A549 (cell line): ENCODE measurements at regions of chr1 and their contacts with region 1.

Region 1: DNA sequence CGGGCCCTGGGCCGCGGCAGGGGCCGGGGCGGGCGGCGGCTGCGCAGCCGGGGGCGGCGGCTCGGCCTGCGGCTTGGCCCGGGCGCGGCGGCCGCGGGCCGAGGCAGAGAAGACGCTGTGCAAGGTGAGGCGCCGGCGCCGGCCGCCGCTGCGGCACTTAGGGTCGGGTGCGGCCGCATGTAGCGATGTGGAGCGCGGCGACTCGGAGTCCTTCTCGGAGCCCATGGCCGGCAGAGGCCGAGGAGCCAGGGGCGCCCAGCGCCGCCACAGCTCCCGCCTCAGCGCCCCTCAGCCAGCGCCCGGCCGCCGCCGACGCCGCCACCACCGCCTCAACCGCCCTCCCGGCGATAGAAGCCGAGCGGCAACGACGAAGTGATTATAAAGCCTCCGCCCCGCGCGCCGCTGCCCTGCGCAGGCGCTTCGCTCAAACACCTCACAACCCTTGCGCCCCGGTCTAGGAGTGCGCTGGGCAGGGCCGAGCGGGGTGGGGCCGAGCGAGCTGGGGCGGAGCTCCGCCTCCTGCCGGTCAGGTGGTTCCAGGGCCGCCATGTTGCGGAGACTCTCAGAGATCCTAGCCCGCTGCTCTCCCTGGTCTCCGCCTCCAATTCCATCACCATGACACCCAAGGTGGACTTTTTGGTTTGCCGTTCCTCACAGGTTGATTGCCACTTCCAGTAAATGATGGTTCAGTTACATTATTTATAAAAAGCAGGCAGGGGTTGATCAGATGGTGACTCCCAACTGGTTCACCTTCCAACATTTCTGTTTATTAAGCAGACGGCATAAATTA is at the start of gene RNF19B:
- DNase-seq: peak; percentile 90 to 94
- ATAC-seq: peak; percentile 90 to 98
- H3K4me3 ChIP-seq: peak within 1 kb of the TSS; percentile 91
- H3K27ac ChIP-seq: peak within 1 kb of the TSS; percentile 81 to 98
- H3K4me1 ChIP-seq: peaks cover 16% of the 10 kb centered on the region; the same call in 2 of the 3 replicates
- CTCF ChIP-seq: no peak
- EP300 ChIP-seq: no peak
- POLR2A ChIP-seq: peak; percentile 98
- RAD21 ChIP-seq: peak; percentile 2 to 27; a peak in 1 of 5 replicates
- polyA plus RNA-seq, gene RNF19B: 21.7 and 22.6 TPM in 2 replicates

Region 2: DNA sequence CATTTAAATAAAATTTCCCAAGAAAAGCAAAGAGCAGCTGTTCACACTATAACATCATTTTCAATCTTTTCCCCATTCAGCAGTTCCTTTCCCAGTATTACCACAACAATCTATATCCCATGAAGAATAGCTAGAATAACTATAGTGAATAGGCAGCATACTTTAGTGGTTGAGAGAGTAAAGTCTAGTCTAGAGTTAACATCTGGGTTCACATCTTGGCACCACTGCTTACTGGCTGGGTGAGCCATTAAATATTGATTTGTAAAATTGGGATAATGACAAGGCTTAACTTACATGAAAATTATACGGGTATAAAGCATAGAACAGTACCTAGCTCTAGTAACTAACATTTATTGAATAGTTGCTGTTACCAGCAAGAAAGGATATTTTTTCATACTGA is 132.8 kb before region 1 on chr1:
- CTCF ChIA-PET with region 1: no interaction called
- POLR2A ChIA-PET with region 1: no interaction called
- DNase-seq: no peak
- ATAC-seq: no peak
- H3K4me3 ChIP-seq: no peak overlapping the region
- H3K27ac ChIP-seq: no peak overlapping the region
- H3K4me1 ChIP-seq: no peaks in the 10 kb centered on the region
- CTCF ChIP-seq: no peak
- EP300 ChIP-seq: no peak
- POLR2A ChIP-seq: no peak
- RAD21 ChIP-seq: no peak

Region 3: DNA sequence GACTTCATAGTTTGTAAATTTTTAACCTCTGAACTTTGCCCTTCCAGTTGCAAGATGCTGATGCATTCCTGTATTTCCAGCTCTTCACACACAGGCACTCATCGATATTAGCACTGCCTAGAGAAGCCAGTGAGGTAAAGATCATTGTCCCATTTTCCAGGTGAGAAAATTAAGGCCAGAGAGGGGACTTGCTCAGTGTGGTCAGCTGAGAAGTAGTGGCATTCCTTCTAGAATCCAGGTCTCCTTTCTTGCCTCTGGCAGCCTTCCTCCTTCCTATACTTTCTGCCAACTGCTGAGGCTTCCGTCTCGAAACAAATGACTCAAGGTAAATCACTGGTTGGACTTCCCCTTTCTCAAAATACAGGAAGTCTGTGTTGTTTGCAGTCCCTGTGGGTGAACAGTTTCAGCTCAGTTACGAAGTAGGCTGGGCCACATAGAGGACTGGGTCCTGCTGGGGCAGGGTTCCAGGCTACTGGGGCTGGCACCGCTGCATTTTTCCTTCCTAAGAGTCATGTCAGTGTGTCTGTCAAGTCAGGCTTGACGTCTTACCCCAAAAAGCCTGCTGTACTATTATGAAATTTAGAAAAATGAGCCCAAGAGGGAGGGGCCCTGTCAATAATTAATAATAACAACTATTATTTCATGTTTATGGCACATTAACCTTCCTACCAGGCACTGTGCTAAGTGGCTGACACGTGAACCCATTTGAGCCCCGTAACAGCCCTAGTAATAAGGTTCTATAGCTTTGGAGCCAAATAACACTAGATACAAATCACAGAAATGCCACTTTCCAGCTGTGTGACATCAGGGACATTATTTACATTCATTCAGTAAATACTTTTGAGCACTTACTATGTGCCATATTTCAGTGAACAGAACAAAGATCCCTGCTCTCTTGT is 16.6 kb after region 1 on chr1:
- CTCF ChIA-PET with region 1: interaction called, 4 read pairs
- POLR2A ChIA-PET with region 1: interaction called, 28 read pairs
- DNase-seq: peak; percentile 72 to 91
- ATAC-seq: peak; percentile 97 to 98
- H3K4me3 ChIP-seq: no peak overlapping the region
- H3K27ac ChIP-seq: peak overlapping the region; percentile 84 to 87
- H3K4me1 ChIP-seq: peaks cover 24% of the 10 kb centered on the region
- CTCF ChIP-seq: no peak
- EP300 ChIP-seq: no peak; a peak in 1 of 5 replicates
- POLR2A ChIP-seq: peak; percentile 19; the same call in 1 of the 2 replicates
- RAD21 ChIP-seq: no peak

Region 4: DNA sequence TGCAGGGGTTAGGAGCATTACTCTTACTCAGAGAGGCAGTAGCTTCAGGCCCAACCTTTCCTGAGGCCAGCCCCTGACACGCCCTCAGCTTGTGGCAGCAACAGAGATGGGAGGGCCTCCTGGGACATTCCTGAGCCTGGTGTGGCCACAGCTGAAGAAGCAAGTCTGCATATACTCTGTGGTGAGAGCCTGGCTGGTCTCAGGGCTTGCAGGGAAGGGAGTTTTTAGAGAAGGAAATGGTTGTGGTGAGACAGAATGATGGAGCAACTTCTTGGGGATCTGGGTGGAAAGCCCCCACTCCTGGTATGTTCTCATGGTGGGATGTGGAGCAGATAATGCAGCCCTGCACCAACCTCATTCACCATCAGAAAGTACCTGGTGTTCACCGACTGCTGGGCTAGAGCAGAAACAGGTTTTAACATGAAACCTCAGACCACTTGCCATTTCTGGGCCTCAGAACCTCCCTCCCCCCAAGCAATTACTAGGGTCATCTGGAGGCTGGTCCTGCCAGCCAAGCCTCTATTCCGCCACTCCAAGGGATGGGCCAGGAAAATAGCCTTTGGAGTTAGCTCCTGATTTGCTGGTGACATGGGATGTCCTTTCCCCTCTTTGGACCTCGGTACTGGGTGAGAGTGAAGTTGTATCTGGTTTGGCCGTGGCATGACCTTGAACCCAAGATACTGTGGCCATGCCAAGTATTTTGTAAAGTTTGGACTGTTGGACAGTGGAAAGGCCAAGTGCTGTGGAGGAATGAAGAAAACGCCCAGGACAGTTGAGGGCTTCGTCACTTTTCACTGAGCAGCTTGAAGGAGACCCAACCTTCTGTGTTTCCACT is 28.1 kb after region 1 on chr1:
- CTCF ChIA-PET with region 1: interaction called, 3 read pairs
- POLR2A ChIA-PET with region 1: interaction called, 41 read pairs
- DNase-seq: peak; percentile 83 to 89
- ATAC-seq: peak; percentile 93 to 95
- H3K4me3 ChIP-seq: no peak overlapping the region
- H3K27ac ChIP-seq: peak overlapping the region; percentile 75 to 89
- H3K4me1 ChIP-seq: peaks cover 55% of the 10 kb centered on the region
- CTCF ChIP-seq: no peak
- EP300 ChIP-seq: no peak
- POLR2A ChIP-seq: no peak
- RAD21 ChIP-seq: no peak

Region 5: GRCh38 chr1:33080885-33081553 is 116.4 kb after region 1 on chr1 and contains the start of gene AZIN2:
- CTCF ChIA-PET with region 1: no interaction called
- POLR2A ChIA-PET with region 1: interaction called, 11 read pairs
- DNase-seq: peak; percentile 89
- ATAC-seq: peak; percentile 98 to 100
- H3K4me3 ChIP-seq: peak within 1 kb of the TSS; percentile 65
- H3K27ac ChIP-seq: peak within 1 kb of the TSS; percentile 68 to 92
- H3K4me1 ChIP-seq: 0 out of 3 replicates have a peak, but pooled peaks cover 8% of the 10 kb centered on the region
- CTCF ChIP-seq: no peak
- EP300 ChIP-seq: no peak
- POLR2A ChIP-seq: peak; percentile 87
- RAD21 ChIP-seq: no peak
- polyA plus RNA-seq, gene AZIN2: 1.7 and 1.9 TPM in 2 replicates